ENCODE measurements at regions of chr15 and their contacts with region 1.

Region 1: GRCh38 chr15:60520825-60521368 is 42.0 kb upstream of the ICE2 start:
- DNase-seq: peak; percentile 78
- H3K4me3 ChIP-seq: no peak overlapping the region
- H3K27ac ChIP-seq: no peak overlapping the region
- H3K4me1 ChIP-seq: peaks cover 18% of the 10 kb centered on the region
- H3K27me3 ChIP-seq: no peaks in the 10 kb centered on the region
- CTCF ChIP-seq: peak; percentile 75 to 76
- POLR2A ChIP-seq: no peak

Region 2: DNA sequence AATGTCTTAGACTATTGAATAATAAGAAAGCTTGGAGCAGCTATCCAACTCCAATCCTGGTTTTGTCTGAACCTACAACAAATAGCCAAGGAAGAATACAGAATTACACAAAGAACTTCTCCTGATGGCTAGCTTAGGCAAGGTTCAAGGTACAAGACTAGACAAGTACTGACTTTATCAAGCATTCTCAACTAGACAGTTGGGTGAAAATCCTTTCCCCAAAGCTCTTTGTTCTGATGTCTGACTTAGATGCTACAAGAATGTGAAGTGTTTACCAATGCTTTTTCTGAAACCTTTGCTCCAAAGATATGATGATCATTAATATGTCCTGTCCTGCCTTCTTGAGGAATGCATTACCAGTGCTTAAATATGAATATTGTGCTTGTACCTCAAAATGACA is 237.0 kb before region 1 on chr15:
- CTCF ChIA-PET with region 1: no interaction called
- POLR2A ChIA-PET with region 1: no interaction called
- dilution Hi-C with region 1: no loop called
- intact Hi-C with region 1: no loop called
- DNase-seq: no peak
- H3K4me3 ChIP-seq: no peak overlapping the region
- H3K27ac ChIP-seq: no peak overlapping the region
- H3K4me1 ChIP-seq: no peaks in the 10 kb centered on the region
- H3K27me3 ChIP-seq: peaks cover 7 to 8% of the 10 kb centered on the region in 2 experiments
- CTCF ChIP-seq: no peak
- POLR2A ChIP-seq: no peak

Region 3: DNA sequence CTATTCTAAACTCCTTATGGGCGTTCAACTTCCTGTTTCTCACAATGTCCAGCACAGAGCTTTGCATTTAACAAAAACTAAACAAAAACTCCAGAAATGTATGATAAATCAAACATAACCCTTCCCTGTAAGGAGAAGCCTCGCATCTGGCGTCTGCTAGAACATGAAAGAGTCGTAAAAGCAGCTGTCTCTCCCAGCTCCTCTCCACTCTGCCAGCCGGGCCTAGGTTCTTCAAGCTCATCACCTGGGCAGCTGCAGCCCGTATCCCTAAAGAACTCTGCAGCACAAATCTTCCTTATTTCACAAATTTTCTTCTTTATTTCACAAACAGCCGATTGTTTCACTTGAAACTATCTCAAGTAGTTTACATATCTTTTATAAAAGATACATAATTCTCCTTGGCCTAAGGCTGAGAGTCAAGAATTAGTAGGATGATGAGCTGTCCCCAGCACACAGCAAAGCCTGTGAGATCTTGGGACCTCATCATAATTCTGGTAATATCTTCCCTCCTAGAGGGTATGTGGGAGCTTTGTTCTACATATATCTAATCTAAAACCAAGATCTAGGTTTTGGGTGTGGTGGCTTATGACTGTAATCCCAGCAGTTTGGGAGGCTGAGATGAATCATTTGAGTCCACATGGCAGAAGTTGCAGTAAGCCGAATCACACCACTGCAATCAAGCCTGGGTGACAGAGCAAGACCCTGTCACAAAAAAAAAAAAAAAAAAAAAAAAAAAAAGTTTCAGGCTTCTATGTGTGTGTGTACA is 158.4 kb before region 1 on chr15:
- CTCF ChIA-PET with region 1: interaction called, 40 read pairs
- POLR2A ChIA-PET with region 1: no interaction called
- dilution Hi-C with region 1: no loop called
- intact Hi-C with region 1: loop called (anchors 1 kb)
- DNase-seq: no peak
- H3K4me3 ChIP-seq: no peak overlapping the region
- H3K27ac ChIP-seq: peak overlapping the region; percentile 23
- H3K4me1 ChIP-seq: peaks cover 46% of the 10 kb centered on the region
- H3K27me3 ChIP-seq: no peaks in the 10 kb centered on the region
- CTCF ChIP-seq: no peak
- POLR2A ChIP-seq: no peak

Region 4: GRCh38 chr15:60494108-60494507 is 26.8 kb before region 1 on chr15:
- CTCF ChIA-PET with region 1: interaction called, 10 read pairs
- POLR2A ChIA-PET with region 1: no interaction called
- dilution Hi-C with region 1: no loop called
- intact Hi-C with region 1: no loop called
- DNase-seq: no peak
- H3K4me3 ChIP-seq: no peak overlapping the region
- H3K27ac ChIP-seq: no peak overlapping the region
- H3K4me1 ChIP-seq: no peaks in the 10 kb centered on the region
- H3K27me3 ChIP-seq: no peaks in the 10 kb centered on the region
- CTCF ChIP-seq: no peak
- POLR2A ChIP-seq: no peak

Region 5: GRCh38 chr15:60507596-60508424 is 13.1 kb before region 1 on chr15:
- CTCF ChIA-PET with region 1: interaction called, 93 read pairs
- POLR2A ChIA-PET with region 1: no interaction called
- dilution Hi-C with region 1: no loop called
- intact Hi-C with region 1: no loop called
- DNase-seq: peak; percentile 80
- H3K4me3 ChIP-seq: no peak overlapping the region
- H3K27ac ChIP-seq: no peak overlapping the region
- H3K4me1 ChIP-seq: no peaks in the 10 kb centered on the region
- H3K27me3 ChIP-seq: no peaks in the 10 kb centered on the region
- CTCF ChIP-seq: peak; percentile 78 to 87
- POLR2A ChIP-seq: no peak

Region 6: DNA sequence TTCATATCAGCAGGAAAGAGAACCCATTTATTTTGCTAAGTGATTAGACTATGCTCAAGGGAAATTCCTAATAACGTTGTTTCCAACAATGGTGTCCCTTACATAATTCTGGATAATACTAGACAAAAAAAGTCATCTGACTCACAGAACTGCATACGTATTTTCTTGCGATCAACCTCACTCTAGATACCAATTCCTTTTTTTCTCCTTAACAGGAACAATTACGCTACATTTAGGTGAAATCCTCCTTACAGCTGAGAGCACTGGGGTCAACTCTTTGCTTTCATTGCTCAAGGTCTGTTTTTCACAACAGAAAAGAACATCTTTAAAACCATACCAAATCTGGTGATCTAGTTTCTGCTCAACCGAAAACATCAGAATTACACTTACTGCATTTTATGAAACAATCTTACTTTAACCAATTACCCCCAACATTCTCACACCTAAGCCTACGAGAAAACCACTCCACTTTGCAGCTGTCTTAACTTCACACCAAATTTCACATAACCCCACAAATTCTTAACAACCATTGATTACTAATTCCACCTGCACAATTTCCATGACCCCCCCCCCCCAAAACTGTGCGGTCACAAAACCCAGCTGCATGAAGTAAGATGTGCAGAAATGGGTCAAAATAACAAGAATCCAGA is 19.2 kb after region 1 on chr15:
- CTCF ChIA-PET with region 1: interaction called, 19 read pairs
- POLR2A ChIA-PET with region 1: no interaction called
- dilution Hi-C with region 1: no loop called
- intact Hi-C with region 1: no loop called
- DNase-seq: peak; percentile 51
- H3K4me3 ChIP-seq: no peak overlapping the region
- H3K27ac ChIP-seq: no peak overlapping the region
- H3K4me1 ChIP-seq: peaks cover 3% of the 10 kb centered on the region
- H3K27me3 ChIP-seq: no peaks in the 10 kb centered on the region
- CTCF ChIP-seq: no peak
- POLR2A ChIP-seq: no peak

Region 7: DNA sequence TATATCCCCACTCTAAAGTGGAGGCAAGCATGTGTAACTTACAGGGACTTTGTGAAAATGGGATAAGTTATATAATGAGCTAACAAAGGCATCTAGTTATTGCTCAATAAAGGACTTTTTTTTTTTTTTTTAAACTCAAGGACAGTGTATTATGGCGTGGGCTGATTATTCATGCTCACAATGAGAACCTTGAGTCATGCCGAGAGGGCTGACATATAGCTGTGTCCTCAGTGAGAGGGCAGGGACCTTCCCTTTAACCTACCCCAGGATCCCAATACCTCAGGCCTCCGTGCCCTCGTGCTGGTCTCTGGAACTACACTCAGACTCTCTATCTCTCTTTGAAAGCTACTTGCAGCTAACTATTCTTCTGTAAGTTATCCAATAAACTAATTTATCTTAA is 277.9 kb after region 1 on chr15:
- CTCF ChIA-PET with region 1: no interaction called
- POLR2A ChIA-PET with region 1: no interaction called
- dilution Hi-C with region 1: no loop called
- intact Hi-C with region 1: no loop called
- DNase-seq: no peak
- H3K4me3 ChIP-seq: no peak overlapping the region
- H3K27ac ChIP-seq: no peak overlapping the region
- H3K4me1 ChIP-seq: no peaks in the 10 kb centered on the region
- H3K27me3 ChIP-seq: no peaks in the 10 kb centered on the region
- CTCF ChIP-seq: no peak
- POLR2A ChIP-seq: no peak

Region 8: GRCh38 chr15:60883691-60884640 is 363.1 kb after region 1 on chr15:
- CTCF ChIA-PET with region 1: no interaction called
- POLR2A ChIA-PET with region 1: no interaction called
- dilution Hi-C with region 1: no loop called
- intact Hi-C with region 1: no loop called
- DNase-seq: no peak
- H3K4me3 ChIP-seq: no peak overlapping the region
- H3K27ac ChIP-seq: no peak overlapping the region
- H3K4me1 ChIP-seq: no peaks in the 10 kb centered on the region
- H3K27me3 ChIP-seq: peaks cover 0 to 2% of the 10 kb centered on the region in 2 experiments
- CTCF ChIP-seq: no peak
- POLR2A ChIP-seq: no peak